SK-N-SH (cell line): ENCODE measurements at regions of chr15 and their contacts with region 1.

Region 1: DNA sequence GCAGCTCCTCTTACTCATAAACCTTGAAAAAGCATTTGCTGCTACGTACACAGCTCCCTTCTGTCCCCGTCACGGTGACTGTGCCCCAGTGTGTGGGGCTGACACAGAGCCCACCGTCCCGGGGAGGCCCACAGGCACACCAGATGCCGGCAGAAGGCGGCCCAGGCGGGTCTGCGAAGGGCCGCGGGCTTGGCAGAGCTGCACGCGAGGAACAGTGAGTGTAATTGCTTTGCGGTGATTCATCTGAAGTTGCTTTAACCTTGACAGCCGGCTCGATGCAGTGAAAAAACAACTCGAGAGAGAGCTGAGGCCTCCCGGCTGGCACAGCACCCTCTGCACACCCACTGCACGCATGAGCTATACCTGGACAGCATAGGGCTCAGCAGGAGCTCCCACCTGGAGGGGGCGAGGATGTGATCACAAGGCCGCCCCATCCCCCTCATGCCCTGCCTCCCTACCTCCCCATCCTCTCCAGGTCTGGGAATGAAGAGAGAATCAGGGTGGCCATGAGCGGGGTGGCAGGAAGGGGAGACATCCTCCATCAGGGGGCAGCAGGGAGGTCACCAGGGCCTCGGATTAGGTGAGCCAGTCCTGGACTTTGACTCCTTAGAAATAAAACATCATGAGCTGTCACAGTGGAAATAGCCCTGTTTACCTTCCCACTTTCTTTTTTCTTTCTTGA is 172.7 kb downstream of the MEGF11 start:
- DNase-seq: peak; percentile 58
- H3K4me3 ChIP-seq: no peak overlapping the region
- H3K27ac ChIP-seq: no peak overlapping the region
- H3K4me1 ChIP-seq: peaks cover 0 to 16% of the 10 kb centered on the region in 2 experiments; a peak in 1 of 4 replicates
- H3K27me3 ChIP-seq: no peaks in the 10 kb centered on the region; the same call in 1 of the 2 replicates
- CTCF ChIP-seq: peak; percentile 27
- EP300 ChIP-seq: no peak
- RAD21 ChIP-seq: peak; percentile 24; the same call in 1 of the 2 replicates

Region 2: GRCh38 chr15:66092053-66093016 is 11.5 kb after region 1 on chr15:
- CTCF ChIA-PET with region 1: interaction called, 11 read pairs
- POLR2A ChIA-PET with region 1: no interaction called
- DNase-seq: no peak
- H3K4me3 ChIP-seq: no peak overlapping the region
- H3K27ac ChIP-seq: no peak overlapping the region
- H3K4me1 ChIP-seq: peaks cover 0 to 19% of the 10 kb centered on the region in 2 experiments; a peak in 2 of 4 replicates
- H3K27me3 ChIP-seq: peaks cover 6% of the 10 kb centered on the region; the same call in 1 of the 2 replicates
- CTCF ChIP-seq: no peak
- EP300 ChIP-seq: no peak
- RAD21 ChIP-seq: no peak

Region 3: DNA sequence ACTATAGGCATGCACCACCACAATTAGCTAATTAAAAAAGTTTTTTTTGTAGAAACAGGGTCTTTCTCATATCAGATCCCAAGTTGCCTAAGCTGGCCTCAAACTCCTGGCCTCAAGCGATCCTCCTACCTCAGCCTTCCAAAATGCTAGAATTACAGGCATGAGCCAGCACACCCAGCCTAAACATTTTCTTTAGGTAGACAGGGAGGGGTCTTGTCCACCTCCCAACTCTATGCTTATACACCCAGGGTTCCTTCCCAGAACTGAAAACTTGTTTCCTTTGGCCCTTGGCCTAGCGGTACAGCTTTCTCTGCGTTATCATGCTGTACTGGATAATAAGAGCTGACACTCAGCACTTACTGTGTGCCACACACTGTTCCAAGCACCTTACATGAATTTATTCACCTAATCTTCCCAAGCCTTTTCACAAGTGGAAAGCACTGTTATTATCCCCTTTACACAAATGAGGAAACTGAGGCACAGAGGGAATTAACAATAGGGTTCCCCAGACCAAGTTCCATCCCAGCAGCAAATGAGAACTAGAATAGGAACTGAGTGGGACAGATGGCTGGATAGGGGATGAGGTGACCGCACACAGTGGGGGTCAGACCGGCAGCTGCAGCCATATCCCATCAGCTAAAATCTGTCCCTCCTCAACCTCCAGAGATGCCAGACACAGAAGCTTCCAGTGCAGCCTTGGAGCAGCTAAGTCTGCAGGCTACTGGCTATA is 21.9 kb after region 1 on chr15:
- CTCF ChIA-PET with region 1: no interaction called
- POLR2A ChIA-PET with region 1: no interaction called
- DNase-seq: no peak
- H3K4me3 ChIP-seq: no peak overlapping the region
- H3K27ac ChIP-seq: no peak overlapping the region
- H3K4me1 ChIP-seq: no peaks in the 10 kb centered on the region; a peak in 1 of 4 replicates
- H3K27me3 ChIP-seq: peaks cover 29% of the 10 kb centered on the region
- CTCF ChIP-seq: no peak
- EP300 ChIP-seq: no peak
- RAD21 ChIP-seq: no peak

Region 4: GRCh38 chr15:66169023-66169422 is 88.2 kb after region 1 on chr15:
- CTCF ChIA-PET with region 1: no interaction called
- POLR2A ChIA-PET with region 1: no interaction called
- DNase-seq: no peak
- H3K4me3 ChIP-seq: no peak overlapping the region
- H3K27ac ChIP-seq: no peak overlapping the region; a peak in 1 of 4 replicates
- H3K4me1 ChIP-seq: peaks cover 0 to 24% of the 10 kb centered on the region in 2 experiments; a peak in 1 of 4 replicates
- H3K27me3 ChIP-seq: peaks cover 9% of the 10 kb centered on the region; the same call in 1 of the 2 replicates
- CTCF ChIP-seq: no peak
- EP300 ChIP-seq: no peak
- RAD21 ChIP-seq: no peak